Calu3 (cell line): ENCODE measurements at regions of chr18 and their contacts with region 1.

Region 1: DNA sequence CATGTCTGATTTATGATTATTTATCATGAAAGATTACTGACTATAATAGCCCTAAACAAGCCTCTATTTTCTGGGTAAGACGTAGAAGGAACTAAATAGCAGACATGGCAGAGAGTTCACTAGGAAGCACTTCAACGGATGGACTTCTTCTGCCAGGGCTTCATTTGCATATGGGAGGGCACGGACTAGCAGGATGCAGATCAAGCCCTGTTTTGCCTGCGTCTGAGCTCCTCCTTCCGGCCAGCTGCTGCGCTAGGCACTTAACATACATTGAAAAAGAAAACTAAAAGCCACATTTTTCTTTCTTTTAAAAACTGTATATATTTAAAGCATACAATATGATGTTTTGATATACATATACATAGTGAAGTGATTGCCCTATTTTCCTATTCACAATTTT is 340.0 kb upstream of the MEX3C start:
- DNase-seq: peak; percentile 68
- H3K4me3 Mint-ChIP-seq: no peak overlapping the region
- H3K27ac Mint-ChIP-seq: no peak overlapping the region
- H3K4me1 Mint-ChIP-seq: no peaks in the 10 kb centered on the region
- H3K27me3 Mint-ChIP-seq: no peaks in the 10 kb centered on the region
- CTCF ChIP-seq: peak; percentile 33

Region 2: GRCh38 chr18:51135795-51136194 is 401.7 kb before region 1 on chr18:
- CTCF ChIA-PET with region 1: no interaction called
- intact Hi-C with region 1: loop called (anchors 10 kb)
- DNase-seq: peak; percentile 25
- H3K4me3 Mint-ChIP-seq: no peak overlapping the region
- H3K27ac Mint-ChIP-seq: no peak overlapping the region
- H3K4me1 Mint-ChIP-seq: peaks cover 10% of the 10 kb centered on the region
- H3K27me3 Mint-ChIP-seq: no peaks in the 10 kb centered on the region
- CTCF ChIP-seq: peak; percentile 55

Region 3: GRCh38 chr18:51235011-51235789 is 302.3 kb before region 1 on chr18:
- CTCF ChIA-PET with region 1: no interaction called
- intact Hi-C with region 1: loop called (anchors 5 kb)
- DNase-seq: peak; percentile 63
- H3K4me3 Mint-ChIP-seq: peak overlapping the region; percentile 49
- H3K27ac Mint-ChIP-seq: peak overlapping the region; percentile 94
- H3K4me1 Mint-ChIP-seq: peaks cover 45% of the 10 kb centered on the region
- H3K27me3 Mint-ChIP-seq: no peaks in the 10 kb centered on the region
- CTCF ChIP-seq: no peak

Region 4: DNA sequence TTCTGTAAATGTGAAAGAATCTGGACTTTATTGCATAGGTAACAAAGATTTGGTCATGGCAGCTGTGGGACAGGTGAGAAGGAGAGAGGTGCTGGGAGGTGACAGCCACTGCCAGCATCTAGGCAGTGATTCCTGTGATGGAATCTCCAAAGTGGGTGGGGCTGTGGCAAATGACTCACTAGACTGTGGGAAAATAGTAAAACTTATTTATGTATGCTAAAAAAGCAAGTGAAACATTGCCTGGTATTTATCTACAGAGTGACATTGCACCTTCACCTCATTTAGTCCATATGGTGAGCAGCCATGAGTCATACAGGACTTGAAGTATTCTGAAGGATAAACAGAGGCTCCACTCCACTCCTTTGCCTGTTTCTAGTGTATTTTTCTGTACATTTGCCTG is 194.7 kb before region 1 on chr18:
- CTCF ChIA-PET with region 1: no interaction called
- intact Hi-C with region 1: loop called (anchors 5 kb)
- DNase-seq: peak; percentile 61
- H3K4me3 Mint-ChIP-seq: no peak overlapping the region
- H3K27ac Mint-ChIP-seq: no peak overlapping the region
- H3K4me1 Mint-ChIP-seq: no peaks in the 10 kb centered on the region
- H3K27me3 Mint-ChIP-seq: peaks cover 8% of the 10 kb centered on the region
- CTCF ChIP-seq: no peak

Region 5: GRCh38 chr18:51767293-51767692 is 229.8 kb after region 1 on chr18:
- CTCF ChIA-PET with region 1: no interaction called
- intact Hi-C with region 1: no loop called
- DNase-seq: no peak
- H3K4me3 Mint-ChIP-seq: no peak overlapping the region
- H3K27ac Mint-ChIP-seq: no peak overlapping the region
- H3K4me1 Mint-ChIP-seq: no peaks in the 10 kb centered on the region
- H3K27me3 Mint-ChIP-seq: peaks cover 14% of the 10 kb centered on the region
- CTCF ChIP-seq: no peak